ENCODE measurements at regions of chr2 and their contacts with region 1.

Region 1: DNA sequence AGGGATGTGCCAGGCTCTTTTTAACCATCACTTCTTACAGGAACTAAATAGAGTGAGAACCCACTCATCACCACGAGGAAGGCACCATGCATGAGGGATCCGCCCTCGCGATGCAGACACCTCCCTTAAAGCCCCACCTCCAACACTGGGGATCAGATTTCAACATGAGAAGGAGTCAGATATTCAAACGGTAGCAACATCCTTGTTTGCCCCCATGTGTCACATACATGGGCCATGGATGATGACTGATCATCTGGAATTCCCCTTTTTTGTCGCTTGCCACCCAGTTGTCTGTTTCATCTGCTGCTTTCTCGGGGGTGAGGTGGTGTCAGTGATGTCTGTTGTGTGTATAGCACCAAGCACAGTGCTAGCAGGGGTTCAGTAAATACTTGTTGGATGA is 57.9 kb downstream of the NCK2 start:
- DNase-seq: peak; percentile 42
- ATAC-seq: peak; percentile 43
- H3K4me3 Mint-ChIP-seq: peak overlapping the region; percentile 31
- H3K27ac Mint-ChIP-seq: peak overlapping the region; percentile 97
- H3K4me1 Mint-ChIP-seq: peaks cover 92% of the 10 kb centered on the region
- H3K27me3 Mint-ChIP-seq: no peaks in the 10 kb centered on the region

Region 2: DNA sequence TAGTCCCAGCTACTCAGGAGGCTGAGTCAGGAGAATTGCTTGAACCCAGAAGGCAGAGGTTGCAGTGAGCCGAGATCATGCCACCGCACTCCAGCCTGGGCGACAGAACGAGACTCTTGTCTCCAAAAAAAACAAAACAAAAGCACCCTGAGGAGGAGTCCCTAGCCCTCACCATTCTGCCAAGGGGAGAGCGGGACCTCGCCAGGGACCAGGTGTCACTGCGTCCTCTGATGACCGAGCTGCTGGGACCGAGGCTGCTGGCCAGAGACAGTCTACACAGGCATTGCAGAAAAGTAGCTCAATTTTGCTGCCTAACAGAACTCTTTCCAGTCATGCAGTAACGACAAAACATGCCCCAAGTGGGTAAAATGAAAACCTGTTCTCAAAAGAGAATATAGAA is 39.5 kb before region 1 on chr2:
- CTCF ChIA-PET with region 1: no interaction called
- POLR2A ChIA-PET with region 1: no interaction called
- DNase-seq: no peak
- ATAC-seq: no peak
- H3K4me3 Mint-ChIP-seq: no peak overlapping the region
- H3K27ac Mint-ChIP-seq: no peak overlapping the region
- H3K4me1 Mint-ChIP-seq: peaks cover 87% of the 10 kb centered on the region
- H3K27me3 Mint-ChIP-seq: no peaks in the 10 kb centered on the region

Region 3: GRCh38 chr2:105822186-105822585 is 19.6 kb after region 1 on chr2:
- CTCF ChIA-PET with region 1: interaction called, 19 read pairs
- POLR2A ChIA-PET with region 1: interaction called, 7 read pairs
- DNase-seq: peak; percentile 45
- ATAC-seq: peak; percentile 89
- H3K4me3 Mint-ChIP-seq: peak overlapping the region; percentile 5
- H3K27ac Mint-ChIP-seq: peak overlapping the region; percentile 80
- H3K4me1 Mint-ChIP-seq: peaks cover 64% of the 10 kb centered on the region
- H3K27me3 Mint-ChIP-seq: no peaks in the 10 kb centered on the region